Panc1 (cell line): ENCODE measurements at regions of chr11 and their contacts with region 1.

Region 1: GRCh38 chr11:88543902-88544655 is 206.5 kb upstream of the CTSC start:
- DNase-seq: peak; percentile 92
- ATAC-seq: peak; percentile 100
- H3K4me3 ChIP-seq: no peak overlapping the region
- H3K27ac ChIP-seq: no peak overlapping the region
- H3K4me1 ChIP-seq: no peaks in the 10 kb centered on the region
- H3K27me3 ChIP-seq: no peaks in the 10 kb centered on the region
- CTCF ChIP-seq: peak; percentile 97

Region 2: DNA sequence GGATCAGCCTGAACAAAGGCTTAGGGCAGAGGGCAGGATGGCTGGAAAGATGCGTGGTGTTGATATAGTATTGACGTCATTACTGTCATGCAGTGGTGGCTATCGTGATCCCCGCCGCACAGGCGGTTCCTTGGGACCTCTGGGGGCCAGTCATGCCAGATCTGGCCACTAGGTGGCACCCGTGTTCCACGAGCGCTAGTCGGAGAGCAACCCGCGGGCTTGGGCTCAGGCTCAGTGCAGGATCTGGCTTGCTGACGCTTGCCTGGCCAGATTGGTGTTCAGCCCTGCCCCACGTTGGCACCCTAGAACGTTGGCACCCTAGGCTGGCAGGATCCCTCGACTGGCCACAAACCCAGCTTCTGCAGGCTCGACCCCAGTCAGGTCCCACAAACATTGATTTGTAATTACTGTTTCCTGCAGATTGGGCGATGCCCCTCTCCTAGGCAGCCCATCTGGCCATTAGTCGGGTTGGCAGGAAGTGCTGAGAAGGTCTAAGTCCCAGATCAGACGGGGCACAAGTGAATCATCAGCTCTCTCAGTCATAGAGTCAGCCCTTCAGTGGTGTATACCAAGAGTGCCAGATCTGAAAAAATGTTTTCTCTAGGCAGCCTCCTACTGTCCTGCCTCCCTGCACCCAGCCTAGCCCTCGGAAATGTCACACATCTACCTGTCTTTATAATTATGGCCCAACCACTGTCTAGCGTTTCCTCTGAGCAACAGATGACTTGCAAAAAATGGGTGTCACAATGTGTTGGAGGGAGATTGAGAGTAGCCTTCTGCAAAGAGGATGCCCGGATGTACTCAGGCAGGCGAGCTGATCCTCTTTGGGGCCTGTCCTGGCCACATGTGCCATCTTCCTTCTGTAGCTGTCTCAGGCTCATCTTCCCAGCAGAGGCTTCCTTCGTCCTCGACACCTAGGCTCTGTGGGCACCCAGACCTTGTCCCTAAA is 1191.0 kb before region 1 on chr11:
- CTCF ChIA-PET with region 1: no interaction called
- POLR2A ChIA-PET with region 1: no interaction called
- in situ Hi-C with region 1: no loop called
- intact Hi-C with region 1: loop called (anchors 5 kb)
- DNase-seq: peak; percentile 67
- ATAC-seq: peak; percentile 99
- H3K4me3 ChIP-seq: no peak overlapping the region
- H3K27ac ChIP-seq: no peak overlapping the region
- H3K4me1 ChIP-seq: no peaks in the 10 kb centered on the region
- H3K27me3 ChIP-seq: peaks cover 3% of the 10 kb centered on the region
- CTCF ChIP-seq: peak; percentile 100

Region 3: DNA sequence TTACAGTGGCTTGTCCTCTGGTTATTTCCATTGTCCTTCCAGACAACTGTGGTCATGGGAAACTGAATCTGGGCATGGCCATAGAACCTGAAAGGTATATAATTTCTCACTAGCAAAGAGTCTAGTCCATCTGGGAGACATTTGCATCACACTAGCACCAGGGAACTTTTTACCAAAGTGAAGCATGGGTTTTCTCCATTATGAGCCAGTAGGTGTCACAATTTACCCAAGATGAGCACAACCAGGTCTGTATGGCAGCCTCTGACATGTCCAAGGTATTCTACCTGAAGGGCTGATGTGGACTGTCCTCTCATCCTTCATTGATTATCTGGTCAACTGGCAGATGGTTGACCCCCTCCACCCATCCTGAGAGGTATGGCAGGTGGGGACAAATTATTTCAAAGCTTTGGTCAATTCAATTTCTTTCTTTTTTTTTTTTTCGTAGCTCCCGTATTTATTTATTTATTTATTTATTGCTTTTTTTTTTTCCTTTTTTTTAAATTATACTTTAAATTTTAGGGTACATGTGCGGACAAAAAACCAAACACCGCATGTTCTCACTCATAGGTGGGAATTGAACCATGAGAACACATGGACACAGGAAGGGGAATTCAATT is 1080.5 kb before region 1 on chr11:
- CTCF ChIA-PET with region 1: no interaction called
- POLR2A ChIA-PET with region 1: no interaction called
- in situ Hi-C with region 1: no loop called
- intact Hi-C with region 1: loop called (anchors 10 kb)
- DNase-seq: peak; percentile 17
- ATAC-seq: peak; percentile 86
- H3K4me3 ChIP-seq: no peak overlapping the region
- H3K27ac ChIP-seq: no peak overlapping the region
- H3K4me1 ChIP-seq: no peaks in the 10 kb centered on the region
- H3K27me3 ChIP-seq: peaks cover 2% of the 10 kb centered on the region; the same call in 1 of the 2 replicates
- CTCF ChIP-seq: peak; percentile 75

Region 4: GRCh38 chr11:87878373-87878779 is 665.7 kb before region 1 on chr11:
- CTCF ChIA-PET with region 1: no interaction called
- POLR2A ChIA-PET with region 1: no interaction called
- in situ Hi-C with region 1: no loop called
- intact Hi-C with region 1: loop called (anchors 10 kb)
- DNase-seq: peak; percentile 8
- ATAC-seq: no peak
- H3K4me3 ChIP-seq: no peak overlapping the region
- H3K27ac ChIP-seq: no peak overlapping the region
- H3K4me1 ChIP-seq: no peaks in the 10 kb centered on the region
- H3K27me3 ChIP-seq: no peaks in the 10 kb centered on the region
- CTCF ChIP-seq: peak; percentile 62; the same call in 1 of the 2 replicates

Region 5: DNA sequence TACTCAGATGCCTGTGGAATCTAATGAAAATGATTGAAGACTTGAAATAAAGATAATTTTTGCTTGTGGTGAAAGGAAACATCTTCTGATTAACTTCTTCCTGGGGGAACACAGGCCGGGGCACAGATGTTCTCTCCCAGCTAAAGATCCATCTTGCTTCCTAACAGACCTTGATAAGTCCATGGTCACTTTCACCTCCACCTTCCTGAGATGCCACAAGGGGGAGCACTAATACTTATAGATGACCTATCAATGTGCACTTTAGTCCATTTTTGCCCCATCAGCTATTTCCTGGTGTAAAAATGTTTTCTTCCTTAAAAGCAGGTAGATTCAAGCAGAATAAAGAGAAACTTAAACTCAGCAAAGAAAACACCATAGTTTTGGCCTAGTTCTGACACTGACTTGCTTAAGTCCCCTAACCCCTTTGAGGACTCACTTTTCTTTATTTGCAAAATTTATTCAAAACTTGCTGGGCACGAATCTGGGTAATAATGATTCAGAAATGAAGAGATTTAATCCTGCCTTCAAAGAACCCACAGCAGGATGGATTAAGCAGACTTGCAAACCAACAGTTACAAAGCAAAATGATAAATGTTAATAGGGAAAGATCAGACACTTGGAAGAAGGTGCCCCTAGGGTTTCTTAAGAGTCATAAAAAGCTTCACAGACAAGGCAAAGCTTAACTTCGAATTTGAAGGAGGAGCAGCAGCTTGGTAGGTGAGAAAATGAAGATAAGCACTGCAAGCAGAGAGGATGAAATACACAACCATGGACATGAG is 527.5 kb before region 1 on chr11:
- CTCF ChIA-PET with region 1: interaction called, 6 read pairs
- POLR2A ChIA-PET with region 1: no interaction called
- in situ Hi-C with region 1: no loop called
- intact Hi-C with region 1: loop called (anchors 1 kb)
- DNase-seq: peak; percentile 82
- ATAC-seq: peak; percentile 93
- H3K4me3 ChIP-seq: no peak overlapping the region
- H3K27ac ChIP-seq: no peak overlapping the region
- H3K4me1 ChIP-seq: no peaks in the 10 kb centered on the region
- H3K27me3 ChIP-seq: no peaks in the 10 kb centered on the region; the same call in 1 of the 2 replicates
- CTCF ChIP-seq: peak; percentile 84

Region 6: GRCh38 chr11:88103337-88104206 is 440.5 kb before region 1 on chr11:
- CTCF ChIA-PET with region 1: no interaction called
- POLR2A ChIA-PET with region 1: no interaction called
- in situ Hi-C with region 1: no loop called
- intact Hi-C with region 1: loop called (anchors 2 kb)
- DNase-seq: peak; percentile 67
- ATAC-seq: peak; percentile 91
- H3K4me3 ChIP-seq: no peak overlapping the region
- H3K27ac ChIP-seq: no peak overlapping the region
- H3K4me1 ChIP-seq: no peaks in the 10 kb centered on the region
- H3K27me3 ChIP-seq: peaks cover 12% of the 10 kb centered on the region; the same call in 1 of the 2 replicates
- CTCF ChIP-seq: peak; percentile 88

Region 7: DNA sequence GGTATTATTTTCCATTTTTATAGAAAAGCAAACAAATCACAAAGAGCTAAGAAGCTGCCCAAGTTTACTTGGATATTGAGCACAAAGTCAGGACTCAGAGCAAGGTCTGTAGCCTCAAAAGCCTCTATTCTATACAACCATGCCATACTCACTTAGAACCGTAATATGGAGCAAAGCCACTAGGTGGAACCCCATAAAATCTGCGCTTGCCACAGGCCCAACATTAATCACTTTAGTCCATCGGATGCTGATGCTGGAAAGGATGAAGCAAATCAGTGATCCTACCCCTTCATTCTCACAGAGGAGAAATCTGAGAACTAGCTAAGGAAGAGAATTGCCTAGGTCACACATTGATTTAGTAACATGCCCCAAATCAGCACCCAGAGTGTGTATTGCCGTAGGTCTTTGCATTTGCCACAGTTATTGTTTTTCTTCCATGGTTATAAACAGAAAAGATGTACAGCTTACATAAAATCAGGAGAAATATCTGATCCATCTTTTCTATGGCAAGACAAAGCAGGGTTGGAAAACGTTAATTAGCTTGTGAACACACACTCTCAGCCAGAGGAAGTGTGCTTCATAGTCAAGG is 312.1 kb before region 1 on chr11:
- CTCF ChIA-PET with region 1: no interaction called
- POLR2A ChIA-PET with region 1: no interaction called
- in situ Hi-C with region 1: no loop called
- intact Hi-C with region 1: loop called (anchors 2 kb)
- DNase-seq: peak; percentile 22
- ATAC-seq: peak; percentile 83
- H3K4me3 ChIP-seq: no peak overlapping the region
- H3K27ac ChIP-seq: no peak overlapping the region
- H3K4me1 ChIP-seq: no peaks in the 10 kb centered on the region
- H3K27me3 ChIP-seq: no peaks in the 10 kb centered on the region
- CTCF ChIP-seq: peak; percentile 76

Region 8: DNA sequence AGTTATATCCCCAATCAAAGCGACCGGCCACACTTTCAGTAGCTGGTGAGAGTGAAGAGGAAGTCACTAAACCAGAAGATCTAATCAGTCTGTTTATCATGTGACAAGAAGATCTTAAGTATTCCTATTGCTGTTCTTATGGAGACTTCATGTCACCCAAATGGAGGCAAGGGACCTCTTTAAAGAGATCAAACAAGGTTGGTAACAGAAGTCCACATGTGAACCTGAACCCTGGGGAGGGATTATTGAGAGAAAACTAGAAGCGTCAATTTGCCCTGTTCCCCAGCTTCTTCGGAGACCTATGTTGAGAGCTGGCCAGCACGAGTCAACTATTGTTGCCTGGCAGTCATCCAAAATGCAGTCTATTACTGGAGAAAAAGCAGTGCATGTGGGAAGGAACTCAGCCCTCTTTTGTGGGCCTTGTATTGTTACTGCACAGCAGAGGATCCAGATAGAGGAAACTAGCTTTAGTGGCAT is 129.7 kb before region 1 on chr11:
- CTCF ChIA-PET with region 1: no interaction called
- POLR2A ChIA-PET with region 1: no interaction called
- in situ Hi-C with region 1: no loop called
- intact Hi-C with region 1: no loop called
- DNase-seq: no peak
- ATAC-seq: no peak
- H3K4me3 ChIP-seq: no peak overlapping the region
- H3K27ac ChIP-seq: no peak overlapping the region
- H3K4me1 ChIP-seq: no peaks in the 10 kb centered on the region
- H3K27me3 ChIP-seq: no peaks in the 10 kb centered on the region
- CTCF ChIP-seq: no peak

Region 9: DNA sequence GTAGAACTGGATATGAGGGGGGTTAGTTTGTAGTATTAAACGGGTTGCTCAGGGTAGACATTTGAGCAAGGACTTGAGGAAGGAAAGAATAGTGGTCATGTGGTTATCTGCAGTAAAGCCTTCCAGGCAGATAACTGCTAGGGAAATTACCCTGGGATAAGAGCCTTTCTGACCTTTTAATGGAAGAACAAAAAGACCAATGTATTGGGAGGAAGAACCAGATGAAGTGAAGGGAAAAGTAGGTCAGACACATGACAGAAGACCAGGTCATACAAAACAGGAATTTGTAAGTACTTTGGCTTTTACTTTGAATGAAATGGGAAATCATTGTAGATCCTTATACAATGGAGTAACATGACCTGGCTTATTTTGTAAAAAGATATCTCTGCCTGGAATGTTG is 35.4 kb after region 1 on chr11:
- CTCF ChIA-PET with region 1: no interaction called
- POLR2A ChIA-PET with region 1: no interaction called
- in situ Hi-C with region 1: no loop called
- intact Hi-C with region 1: no loop called
- DNase-seq: no peak
- ATAC-seq: no peak
- H3K4me3 ChIP-seq: no peak overlapping the region
- H3K27ac ChIP-seq: no peak overlapping the region
- H3K4me1 ChIP-seq: no peaks in the 10 kb centered on the region
- H3K27me3 ChIP-seq: peaks cover 2% of the 10 kb centered on the region; the same call in 1 of the 2 replicates
- CTCF ChIP-seq: no peak